ENCODE measurements at regions of chr11 and their contacts with region 1.

Region 1: GRCh38 chr11:69296890-69297786 is 3.2 kb downstream of the MYEOV start:
- DNase-seq: peak; percentile 95
- ATAC-seq: peak; percentile 73 to 95 (median 89)
- H3K4me3 ChIP-seq: peak overlapping the region in 8 of 10 donors; percentile 6 to 37 (median 26)
- H3K27ac ChIP-seq: peak overlapping the region; percentile 17 to 94 (median 83)
- H3K4me1 ChIP-seq: peaks cover 26 to 79% (median 56%) of the 10 kb centered on the region in 9 donors
- H3K27me3 ChIP-seq: no peaks in the 10 kb centered on the region
- CTCF ChIP-seq: no peak

Region 2: DNA sequence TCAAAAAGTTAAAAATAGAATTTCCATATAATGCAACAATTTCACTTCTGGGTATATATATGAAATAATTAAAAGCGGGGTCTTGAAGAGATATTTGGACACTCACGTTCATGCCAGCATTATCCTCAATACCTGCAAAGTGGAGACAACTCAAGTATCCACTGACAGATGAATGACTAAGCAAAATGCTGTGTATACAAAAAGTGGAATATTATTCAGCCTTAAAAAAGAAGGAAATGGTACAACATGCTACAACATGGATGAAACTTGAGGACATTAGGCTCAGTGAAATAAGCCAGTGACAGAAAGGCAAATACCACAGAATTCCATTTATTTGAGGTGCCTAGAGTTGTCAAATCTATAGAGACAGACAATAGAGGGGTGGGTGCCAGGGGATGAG is 675.3 kb before region 1 on chr11:
- intact Hi-C with region 1: no loop called
- DNase-seq: no peak
- ATAC-seq: no peak
- H3K4me3 ChIP-seq: no peak overlapping the region
- H3K27ac ChIP-seq: no peak overlapping the region
- H3K4me1 ChIP-seq: no peaks in the 10 kb centered on the region
- H3K27me3 ChIP-seq: peaks cover 0 to 11% (median 0%) of the 10 kb centered on the region in 7 donors
- CTCF ChIP-seq: no peak

Region 3: DNA sequence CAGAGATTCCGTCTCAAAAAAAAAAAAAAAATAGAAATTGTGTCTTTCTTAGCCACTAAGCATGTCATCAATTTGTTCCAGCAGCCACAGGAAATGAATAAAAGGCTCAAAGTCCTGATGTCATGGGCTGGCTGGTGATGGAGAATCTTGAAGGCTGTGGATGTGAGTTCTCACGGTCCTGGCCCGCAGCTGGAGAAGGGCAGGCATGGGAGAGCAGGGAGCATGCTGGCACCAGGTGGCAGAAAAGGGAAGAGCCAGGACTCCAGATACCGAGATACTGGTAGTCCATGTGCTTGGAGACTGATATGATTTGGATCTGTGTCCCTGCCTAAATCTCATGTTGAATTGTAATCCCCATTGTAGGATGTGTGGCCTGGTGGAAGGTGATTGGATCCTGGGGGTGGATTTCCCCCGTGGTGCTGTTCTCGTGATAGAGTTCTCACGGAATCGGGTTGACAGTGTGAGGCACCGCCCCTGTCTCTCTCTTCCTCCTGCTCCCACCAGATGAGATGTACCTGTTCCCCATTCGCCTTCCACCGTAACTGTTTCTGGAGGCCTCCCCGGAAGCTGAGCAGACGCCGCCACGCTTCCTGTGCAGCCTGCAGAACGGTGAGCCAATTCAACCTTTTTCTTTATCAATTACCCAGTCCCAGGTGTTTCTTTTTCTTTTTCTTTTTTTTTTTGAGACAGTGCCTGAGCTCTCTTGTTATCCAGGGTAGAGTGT is 334.4 kb before region 1 on chr11:
- intact Hi-C with region 1: no loop called
- DNase-seq: no peak
- ATAC-seq: no peak
- H3K4me3 ChIP-seq: no peak overlapping the region
- H3K27ac ChIP-seq: no peak overlapping the region
- H3K4me1 ChIP-seq: no peaks in the 10 kb centered on the region
- H3K27me3 ChIP-seq: no peaks in the 10 kb centered on the region
- CTCF ChIP-seq: no peak

Region 4: GRCh38 chr11:69122642-69123431 is 174.3 kb before region 1 on chr11:
- intact Hi-C with region 1: loop called in 2 of 10 experiments (anchors 10 kb)
- DNase-seq: peak; percentile 66 to 71
- ATAC-seq: peak; percentile 72 to 93 (median 90)
- H3K4me3 ChIP-seq: peak overlapping the region in 3 of 10 donors; percentile 10 to 24 (median 18)
- H3K27ac ChIP-seq: peak overlapping the region in 9 of 10 donors; percentile 11 to 85 (median 71)
- H3K4me1 ChIP-seq: peaks cover 12 to 35% (median 22%) of the 10 kb centered on the region in 9 donors
- H3K27me3 ChIP-seq: no peaks in the 10 kb centered on the region
- CTCF ChIP-seq: no peak

Region 5: DNA sequence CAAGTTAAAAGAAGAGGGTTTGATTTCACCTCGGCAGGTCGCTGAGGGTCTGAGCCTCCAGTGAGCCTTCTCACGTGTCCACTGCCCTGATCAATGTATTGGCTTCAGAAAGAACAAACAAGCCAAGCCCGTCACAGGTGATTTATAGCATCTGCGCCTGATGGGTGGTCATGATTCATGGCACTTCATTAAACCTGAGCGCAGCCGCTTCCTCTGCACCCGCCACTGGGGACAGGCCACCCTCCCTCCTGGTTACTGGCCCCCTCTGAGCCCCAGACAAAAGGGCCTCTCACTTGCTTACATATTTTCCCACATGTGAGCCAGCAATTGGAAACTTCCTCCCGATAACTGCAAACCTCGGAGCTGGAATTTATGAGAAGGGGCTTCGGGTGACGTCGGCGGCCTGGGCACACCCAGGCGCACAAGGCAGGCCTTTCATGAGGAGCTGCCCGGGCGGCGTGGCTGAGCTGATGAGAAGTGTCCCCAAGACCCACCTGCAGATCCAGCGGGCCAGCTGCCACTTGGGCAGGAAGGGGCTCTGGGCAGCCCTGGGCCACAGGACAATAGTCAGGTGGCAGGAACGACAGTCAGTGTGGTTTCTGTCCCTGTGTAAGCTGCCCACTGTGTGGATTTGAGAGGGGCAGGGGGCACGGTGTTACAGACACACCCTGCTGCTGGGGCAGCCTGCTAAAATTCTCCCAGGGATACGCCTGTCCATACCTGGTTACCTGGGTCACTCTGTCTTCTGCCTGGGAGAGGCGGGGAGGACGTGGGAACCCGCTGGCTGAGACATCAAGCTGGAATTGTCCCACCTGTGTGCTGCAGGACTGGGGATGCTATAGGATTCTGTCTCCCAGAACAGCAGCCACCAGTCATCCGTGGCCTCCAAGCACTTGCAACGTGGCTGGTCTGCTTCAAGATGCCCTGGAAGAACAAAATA is 120.3 kb after region 1 on chr11:
- intact Hi-C with region 1: loop called in 3 of 10 experiments (anchors 10 kb)
- DNase-seq: no peak
- ATAC-seq: peak in 1 of 8 donors; percentile 34
- H3K4me3 ChIP-seq: no peak overlapping the region
- H3K27ac ChIP-seq: peak overlapping the region in 9 of 10 donors; percentile 38 to 91 (median 78)
- H3K4me1 ChIP-seq: peaks cover 27 to 64% (median 41%) of the 10 kb centered on the region in 9 donors
- H3K27me3 ChIP-seq: no peaks in the 10 kb centered on the region
- CTCF ChIP-seq: no peak

Region 6: DNA sequence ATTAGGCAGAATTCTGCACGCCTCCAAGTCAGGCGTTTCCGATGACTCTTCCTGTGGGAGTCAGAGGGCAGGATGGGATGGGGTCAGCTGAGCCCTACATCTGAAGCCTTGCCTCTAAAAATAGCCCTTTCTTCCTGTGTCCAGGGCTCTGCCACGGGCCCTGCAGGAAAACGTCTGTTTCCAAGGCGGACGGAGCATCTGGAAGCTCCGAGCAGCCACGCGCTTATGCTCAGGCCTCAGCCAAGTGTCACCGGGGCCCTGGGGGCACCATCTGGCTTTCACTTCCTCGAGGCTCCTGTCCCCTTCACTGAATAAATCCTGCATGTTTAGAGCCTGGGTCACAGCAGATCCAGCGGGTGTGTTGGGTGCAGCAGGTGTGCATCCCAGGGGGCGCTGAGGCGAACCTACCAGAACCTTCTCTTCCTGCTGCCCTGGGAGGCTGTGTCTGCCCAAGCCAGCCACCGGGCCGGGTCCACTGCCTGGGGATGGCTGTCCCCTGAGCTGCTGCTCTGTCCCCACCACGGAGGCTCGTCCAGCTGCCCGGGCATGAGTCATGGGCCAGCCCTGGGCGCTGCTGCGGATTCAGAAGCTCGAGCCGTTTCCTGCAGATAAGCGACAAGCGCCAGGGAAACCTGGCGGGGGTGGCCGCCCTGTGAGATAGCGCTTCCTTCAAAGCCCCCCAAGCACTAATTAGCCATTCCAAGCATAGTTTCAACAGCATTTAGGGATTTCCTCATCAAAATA is 152.4 kb after region 1 on chr11:
- intact Hi-C with region 1: loop called in 7 of 10 experiments (anchors 1 to 10 kb)
- DNase-seq: peak; percentile 80 to 85
- ATAC-seq: peak; percentile 68 to 86 (median 81)
- H3K4me3 ChIP-seq: no peak overlapping the region
- H3K27ac ChIP-seq: peak overlapping the region; percentile 71 to 94 (median 85)
- H3K4me1 ChIP-seq: peaks cover 17 to 55% (median 33%) of the 10 kb centered on the region in 9 donors
- H3K27me3 ChIP-seq: no peaks in the 10 kb centered on the region
- CTCF ChIP-seq: peak in 1 of 9 donors; percentile 13

Region 7: GRCh38 chr11:70483077-70483861 is 1186.1 kb after region 1 on chr11:
- intact Hi-C with region 1: no loop called
- DNase-seq: peak; percentile 37 to 45
- ATAC-seq: peak; percentile 46 to 86 (median 63)
- H3K4me3 ChIP-seq: no peak overlapping the region
- H3K27ac ChIP-seq: peak overlapping the region in 9 of 10 donors; percentile 77 to 95 (median 87)
- H3K4me1 ChIP-seq: peaks cover 0 to 20% (median 4%) of the 10 kb centered on the region in 9 donors
- H3K27me3 ChIP-seq: no peaks in the 10 kb centered on the region
- CTCF ChIP-seq: peak; percentile 8 to 62 (median 48)

Measured in heart right ventricle (tissue), 16 donors.